Activated CD4-positive, alpha-beta T cell treated with anti-CD3 and anti-CD28 coated beads for 36 hours (primary cell): ENCODE measurements at regions of chr1 and their contacts with region 1.

Region 1: GRCh38 chr1:109548321-109549267 is at the start of gene GNAI3:
- DNase-seq: peak; percentile 97
- ATAC-seq: peak; percentile 97
- H3K4me3 Mint-ChIP-seq: peak within 1 kb of the TSS; percentile 99
- H3K27ac Mint-ChIP-seq: peak within 1 kb of the TSS; percentile 96
- H3K4me1 Mint-ChIP-seq: peaks cover 49% of the 10 kb centered on the region
- H3K27me3 Mint-ChIP-seq: no peaks in the 10 kb centered on the region
- total RNA-seq, gene GNAI3: 7.1 to 9.6 TPM

Region 2: GRCh38 chr1:109213785-109214468 is 334.7 kb before region 1 on chr1 and contains the start of gene SARS1:
- CTCF ChIA-PET with region 1: interaction called, 5 read pairs
- POLR2A ChIA-PET with region 1: no interaction called
- intact Hi-C with region 1: loop called in 1 of 2 experiments (anchors 1 kb)
- DNase-seq: peak; percentile 93
- ATAC-seq: peak; percentile 85
- H3K4me3 Mint-ChIP-seq: peak within 1 kb of the TSS; percentile 97
- H3K27ac Mint-ChIP-seq: peak within 1 kb of the TSS; percentile 95
- H3K4me1 Mint-ChIP-seq: peaks cover 32% of the 10 kb centered on the region
- H3K27me3 Mint-ChIP-seq: peaks cover 1% of the 10 kb centered on the region
- total RNA-seq, gene SARS1: 224 to 240 TPM

Region 3: DNA sequence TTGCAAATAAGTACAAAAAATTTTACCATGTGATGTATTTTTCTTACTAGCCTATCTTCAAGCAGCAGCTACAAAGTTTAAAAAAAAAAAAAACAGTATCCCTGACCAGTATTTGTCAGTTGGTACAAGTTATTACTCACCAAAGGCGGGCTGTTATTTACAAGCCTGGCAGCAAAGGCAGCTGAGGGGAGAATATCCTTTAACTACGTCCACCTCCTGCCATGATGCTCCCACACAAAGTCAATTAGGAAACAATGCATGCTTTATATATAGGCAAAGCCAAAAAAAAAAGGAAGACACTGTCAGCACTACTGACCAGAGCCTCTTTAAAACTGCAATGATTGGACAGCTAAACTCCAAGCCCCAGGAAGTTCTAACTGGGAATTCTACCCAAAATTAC is 136.0 kb before region 1 on chr1:
- CTCF ChIA-PET with region 1: no interaction called
- POLR2A ChIA-PET with region 1: no interaction called
- intact Hi-C with region 1: no loop called
- DNase-seq: no peak
- ATAC-seq: no peak
- H3K4me3 Mint-ChIP-seq: no peak overlapping the region
- H3K27ac Mint-ChIP-seq: no peak overlapping the region
- H3K4me1 Mint-ChIP-seq: peaks cover 28% of the 10 kb centered on the region
- H3K27me3 Mint-ChIP-seq: no peaks in the 10 kb centered on the region

Region 4: DNA sequence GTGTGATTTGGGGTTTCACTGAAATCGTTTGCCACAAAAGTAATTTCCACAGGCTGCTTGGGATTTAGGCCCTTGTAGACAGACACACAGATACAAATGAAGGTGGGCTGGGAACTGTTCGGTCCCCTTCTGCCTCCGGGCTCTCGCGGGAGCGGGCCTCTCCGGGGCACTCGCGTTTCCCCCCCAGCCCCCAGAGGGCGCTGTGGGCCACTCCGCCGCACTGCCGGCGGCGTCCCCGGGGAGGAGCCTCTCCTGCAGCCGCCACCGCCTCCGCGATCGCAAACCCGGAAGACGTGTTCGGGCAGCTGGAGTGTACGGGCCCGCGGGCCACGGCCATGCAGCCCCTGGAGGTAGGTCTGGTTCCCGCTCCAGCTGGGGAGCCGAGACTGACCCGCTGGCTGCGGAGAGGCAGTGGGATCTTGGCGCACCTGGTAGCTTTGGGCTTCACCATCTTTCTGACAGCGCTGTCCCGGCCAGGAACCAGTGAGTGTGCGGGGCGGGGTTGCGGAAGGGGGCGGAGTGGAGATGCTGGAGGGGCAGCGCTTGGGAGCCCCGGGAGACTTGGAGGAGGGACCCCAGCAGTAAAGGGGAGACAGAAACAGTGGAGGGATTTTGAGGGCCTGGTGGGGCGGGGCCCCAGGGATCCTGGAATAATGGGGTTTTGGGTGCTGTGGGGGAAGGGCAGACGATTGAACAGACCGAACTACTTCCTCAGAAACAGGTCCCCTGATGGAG is 54.6 kb before region 1 on chr1 and contains the start of gene CYB561D1:
- CTCF ChIA-PET with region 1: interaction called, 16 read pairs
- POLR2A ChIA-PET with region 1: interaction called, 4 read pairs
- intact Hi-C with region 1: loop called (anchors 1 to 5 kb)
- DNase-seq: peak; percentile 95
- ATAC-seq: peak; percentile 89
- H3K4me3 Mint-ChIP-seq: peak within 1 kb of the TSS; percentile 98
- H3K27ac Mint-ChIP-seq: peak within 1 kb of the TSS; percentile 90
- H3K4me1 Mint-ChIP-seq: peaks cover 45% of the 10 kb centered on the region
- H3K27me3 Mint-ChIP-seq: no peaks in the 10 kb centered on the region
- total RNA-seq, gene CYB561D1: 7.1 to 8.7 TPM

Region 5: GRCh38 chr1:109620841-109621286 is 72.3 kb after region 1 on chr1:
- CTCF ChIA-PET with region 1: interaction called, 27 read pairs
- POLR2A ChIA-PET with region 1: interaction called, 13 read pairs
- intact Hi-C with region 1: loop called (anchors 1 kb)
- DNase-seq: peak; percentile 99
- ATAC-seq: peak; percentile 86
- H3K4me3 Mint-ChIP-seq: peak overlapping the region; percentile 97
- H3K27ac Mint-ChIP-seq: peak overlapping the region; percentile 97
- H3K4me1 Mint-ChIP-seq: peaks cover 60% of the 10 kb centered on the region
- H3K27me3 Mint-ChIP-seq: no peaks in the 10 kb centered on the region

Region 6: DNA sequence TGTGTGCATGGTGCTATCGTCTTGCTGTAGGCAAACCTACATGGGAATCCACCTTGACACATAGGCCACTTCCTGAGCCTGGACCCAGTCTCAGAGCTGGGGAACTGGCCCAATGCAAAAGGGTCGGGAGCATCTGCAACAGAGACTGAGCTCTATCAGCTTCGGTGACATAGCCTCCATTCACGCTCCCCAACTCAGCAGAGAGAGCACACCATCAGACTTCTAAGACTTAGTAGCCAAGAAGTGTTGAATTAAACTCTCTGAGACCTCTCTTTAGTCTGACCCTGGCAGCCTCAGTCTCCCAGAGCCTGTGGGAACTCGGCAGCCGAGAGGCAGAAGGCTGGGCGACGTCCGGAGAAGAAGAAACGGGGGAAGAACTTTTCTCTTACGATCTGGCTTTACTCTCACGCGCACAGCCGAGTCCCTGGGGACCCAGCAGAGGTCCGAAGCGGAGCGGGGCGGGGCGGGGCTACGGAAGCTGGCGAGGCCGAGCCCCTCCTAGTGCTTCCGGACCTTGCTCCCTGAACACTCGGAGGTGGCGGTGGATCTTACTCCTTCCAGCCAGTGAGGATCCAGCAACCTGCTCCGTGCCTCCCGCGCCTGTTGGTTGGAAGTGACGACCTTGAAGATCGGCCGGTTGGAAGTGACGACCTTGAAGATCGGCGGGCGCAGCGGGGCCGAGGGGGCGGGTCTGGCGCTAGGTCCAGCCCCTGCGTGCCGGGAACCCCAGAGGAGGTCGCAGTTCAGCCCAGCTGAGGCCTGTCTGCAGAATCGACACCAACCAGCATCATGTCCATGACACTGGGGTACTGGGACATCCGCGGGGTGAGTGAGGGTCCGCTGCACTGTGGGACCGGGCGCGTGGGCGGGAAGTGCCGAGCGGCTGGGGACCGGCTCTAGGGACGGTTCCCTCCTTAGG is 107.3 kb after region 1 on chr1 and contains the start of gene GSTM4:
- CTCF ChIA-PET with region 1: interaction called, 26 read pairs
- POLR2A ChIA-PET with region 1: no interaction called
- intact Hi-C with region 1: loop called in 1 of 2 experiments (anchors 1 kb)
- DNase-seq: peak; percentile 85
- ATAC-seq: peak; percentile 96
- H3K4me3 Mint-ChIP-seq: peak within 1 kb of the TSS; percentile 93
- H3K27ac Mint-ChIP-seq: peak within 1 kb of the TSS; percentile 90
- H3K4me1 Mint-ChIP-seq: peaks cover 12% of the 10 kb centered on the region
- H3K27me3 Mint-ChIP-seq: peaks cover 3% of the 10 kb centered on the region
- total RNA-seq, gene GSTM4: 18.1 to 20.6 TPM

Region 7: GRCh38 chr1:109984456-109985275 is 436.1 kb after region 1 on chr1 and contains the start of gene AHCYL1:
- CTCF ChIA-PET with region 1: interaction called, 16 read pairs
- POLR2A ChIA-PET with region 1: interaction called, 9 read pairs
- intact Hi-C with region 1: loop called (anchors 1 kb)
- DNase-seq: peak; percentile 100
- ATAC-seq: peak; percentile 99
- H3K4me3 Mint-ChIP-seq: peak within 1 kb of the TSS; percentile 92
- H3K27ac Mint-ChIP-seq: peak within 1 kb of the TSS; percentile 95
- H3K4me1 Mint-ChIP-seq: peaks cover 31% of the 10 kb centered on the region
- H3K27me3 Mint-ChIP-seq: no peaks in the 10 kb centered on the region
- total RNA-seq, gene AHCYL1: 79.1 to 82.6 TPM